Breast epithelium (tissue), 4 donors: ENCODE measurements at regions of chr14 and their contacts with region 1.

Region 1: DNA sequence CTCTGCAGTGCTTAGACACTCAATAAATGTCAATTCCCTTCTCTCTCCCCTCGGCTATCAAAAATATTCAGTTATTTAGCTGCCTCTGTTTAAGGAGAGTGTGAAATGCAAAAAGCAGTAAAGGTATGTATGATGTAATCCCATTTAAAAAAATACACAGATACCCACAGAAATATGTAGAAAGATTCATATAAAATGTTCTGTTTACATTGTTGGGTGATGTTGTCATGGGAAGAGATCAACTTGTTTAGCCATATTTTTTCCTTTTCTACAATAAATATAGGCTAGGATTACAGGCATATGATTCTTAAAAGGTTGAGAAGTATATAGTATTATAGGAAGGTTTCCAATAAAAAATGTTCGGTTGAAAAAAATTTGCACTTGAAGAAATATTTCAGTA is 7.8 kb downstream of the PPP2R3C start:
- DNase-seq: no peak
- H3K4me3 ChIP-seq: no peak overlapping the region
- H3K27ac ChIP-seq: no peak overlapping the region
- H3K4me1 ChIP-seq: no peaks in the 10 kb centered on the region
- H3K27me3 ChIP-seq: no peaks in the 10 kb centered on the region
- CTCF ChIP-seq: no peak
- POLR2A ChIP-seq: no peak

Region 2: DNA sequence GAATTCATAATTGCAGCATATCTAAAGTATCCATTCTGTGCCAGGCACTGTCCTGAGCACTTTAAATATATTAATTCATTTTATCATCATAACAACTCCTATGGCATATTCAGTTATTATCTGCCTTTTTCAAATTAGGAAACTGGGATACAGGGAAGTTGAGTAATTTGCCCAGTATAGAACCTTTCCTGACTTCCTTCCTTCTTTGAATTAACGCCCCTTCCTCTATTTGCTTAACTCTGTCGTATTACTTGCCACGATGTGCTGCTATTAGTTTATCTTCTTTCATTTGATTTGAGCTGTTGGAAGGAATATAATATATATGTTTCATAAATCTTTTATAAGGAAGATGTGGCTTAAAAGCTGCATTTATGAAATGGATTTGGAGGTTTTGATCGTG is 93.3 kb before region 1 on chr14:
- intact Hi-C with region 1: loop called (anchors 2 kb)
- DNase-seq: no peak
- H3K4me3 ChIP-seq: no peak overlapping the region
- H3K27ac ChIP-seq: no peak overlapping the region
- H3K4me1 ChIP-seq: no peaks in the 10 kb centered on the region
- H3K27me3 ChIP-seq: no peaks in the 10 kb centered on the region
- CTCF ChIP-seq: no peak
- POLR2A ChIP-seq: no peak

Region 3: DNA sequence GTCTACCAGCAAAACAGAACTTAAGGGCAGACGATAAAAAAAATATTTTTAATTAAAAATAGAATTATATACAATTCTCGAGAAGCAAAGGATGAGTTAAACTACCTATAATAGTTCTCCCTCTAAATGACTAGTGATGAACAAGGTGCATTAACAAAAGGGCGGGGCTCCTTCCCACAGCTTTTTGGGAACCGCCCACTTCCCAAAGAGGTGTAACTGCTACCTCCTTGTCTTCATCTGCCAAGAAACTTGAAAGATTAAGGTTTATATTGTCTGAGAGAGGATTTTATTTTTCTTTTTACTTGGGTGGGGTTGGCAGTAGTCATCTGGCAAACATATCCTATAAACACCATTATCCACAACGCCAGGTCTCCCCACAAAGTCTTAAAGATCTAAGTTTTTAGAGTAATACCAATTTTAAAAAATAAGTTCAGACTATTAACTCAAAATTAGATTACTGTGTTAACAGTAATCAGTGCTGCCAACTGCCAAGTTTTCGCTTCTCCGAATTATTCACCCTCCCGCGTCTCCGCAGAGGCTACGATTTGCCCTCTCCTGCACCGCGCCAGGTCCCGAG is 694.1 kb after region 1 on chr14:
- intact Hi-C with region 1: loop called (anchors 5 kb)
- DNase-seq: peak in 1 of 2 donors; percentile 50
- H3K4me3 ChIP-seq: peak overlapping the region; percentile 68 to 78 (median 78)
- H3K27ac ChIP-seq: peak overlapping the region; percentile 92 to 94
- H3K4me1 ChIP-seq: no peaks in the 10 kb centered on the region
- H3K27me3 ChIP-seq: no peaks in the 10 kb centered on the region
- CTCF ChIP-seq: no peak
- POLR2A ChIP-seq: no peak